HCT116 (cell line): ENCODE measurements at regions of chr15 and their contacts with region 1.

Region 1: DNA sequence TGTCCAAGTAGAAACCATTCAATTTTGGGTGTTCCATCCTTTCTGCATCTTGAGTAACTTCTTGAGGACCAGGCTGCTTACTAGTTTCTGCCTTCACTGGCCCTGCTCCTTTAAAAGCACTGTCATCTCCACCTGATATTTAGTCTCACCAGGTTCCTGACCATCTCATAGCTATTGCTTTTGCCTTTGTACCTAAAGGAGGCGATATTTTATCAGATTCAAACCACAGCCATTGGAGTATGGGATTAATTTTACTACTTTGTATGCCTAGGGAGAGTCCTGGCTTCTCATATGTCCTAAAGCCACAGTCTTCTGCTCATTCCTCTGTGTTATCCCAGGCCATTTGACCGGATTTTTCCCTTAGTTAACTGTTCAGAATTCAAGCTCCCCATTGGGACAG is 51.8 kb upstream of the RFX7 start:
- DNase-seq: no peak
- ATAC-seq: 0 out of 2 replicates have a peak, but pooled peaks have one; percentile 40
- H3K4me3 ChIP-seq: no peak overlapping the region
- H3K27ac ChIP-seq: no peak overlapping the region
- H3K4me1 ChIP-seq: no peaks in the 10 kb centered on the region
- H3K27me3 ChIP-seq: no peaks in the 10 kb centered on the region
- CTCF ChIP-seq: peak in 1 of 3 experiments; percentile 27; a peak in 1 of 6 replicates
- POLR2A ChIP-seq: no peak
- RAD21 ChIP-seq: no peak

Region 2: DNA sequence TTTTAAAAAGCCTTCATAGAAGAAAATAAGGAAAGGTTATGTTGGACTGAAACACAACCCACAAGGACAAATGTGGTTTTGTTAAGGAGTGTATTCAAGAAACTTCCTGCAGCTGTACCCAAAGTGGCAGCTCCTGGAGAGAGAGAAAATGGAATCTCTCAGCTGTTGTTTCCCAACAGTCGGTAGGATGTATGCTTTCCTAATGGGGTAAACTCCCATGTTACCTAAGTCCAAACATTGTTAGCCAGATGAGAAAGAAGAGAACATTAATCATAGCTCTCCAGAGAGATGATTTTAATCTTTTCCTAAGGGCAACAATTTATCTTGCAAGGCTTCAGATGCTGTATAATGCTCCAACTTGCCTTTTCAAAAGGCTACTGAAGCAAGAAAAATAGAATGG is 47.2 kb after region 1 on chr15:
- CTCF ChIA-PET with region 1: no interaction called
- POLR2A ChIA-PET with region 1: no interaction called
- RAD21 ChIA-PET with region 1: no interaction called
- intact Hi-C with region 1: loop called (anchors 10 kb)
- DNase-seq: no peak
- ATAC-seq: no peak
- H3K4me3 ChIP-seq: no peak overlapping the region
- H3K27ac ChIP-seq: no peak overlapping the region
- H3K4me1 ChIP-seq: no peaks in the 10 kb centered on the region
- H3K27me3 ChIP-seq: no peaks in the 10 kb centered on the region
- CTCF ChIP-seq: no peak
- POLR2A ChIP-seq: no peak
- RAD21 ChIP-seq: no peak